Activated B cell treated with CpG ODN at 0.5 μM for 24 hours (primary cell): ENCODE measurements at regions of chr3 and their contacts with region 1.

Region 1: GRCh38 chr3:23834082-23834870 is 28.5 kb downstream of the UBE2E1 start:
- DNase-seq: no peak
- ATAC-seq: no peak
- H3K4me3 Mint-ChIP-seq: no peak overlapping the region
- H3K27ac Mint-ChIP-seq: no peak overlapping the region
- H3K4me1 Mint-ChIP-seq: peaks cover 75% of the 10 kb centered on the region
- H3K27me3 Mint-ChIP-seq: no peaks in the 10 kb centered on the region
- CTCF ChIP-seq: no peak

Region 2: DNA sequence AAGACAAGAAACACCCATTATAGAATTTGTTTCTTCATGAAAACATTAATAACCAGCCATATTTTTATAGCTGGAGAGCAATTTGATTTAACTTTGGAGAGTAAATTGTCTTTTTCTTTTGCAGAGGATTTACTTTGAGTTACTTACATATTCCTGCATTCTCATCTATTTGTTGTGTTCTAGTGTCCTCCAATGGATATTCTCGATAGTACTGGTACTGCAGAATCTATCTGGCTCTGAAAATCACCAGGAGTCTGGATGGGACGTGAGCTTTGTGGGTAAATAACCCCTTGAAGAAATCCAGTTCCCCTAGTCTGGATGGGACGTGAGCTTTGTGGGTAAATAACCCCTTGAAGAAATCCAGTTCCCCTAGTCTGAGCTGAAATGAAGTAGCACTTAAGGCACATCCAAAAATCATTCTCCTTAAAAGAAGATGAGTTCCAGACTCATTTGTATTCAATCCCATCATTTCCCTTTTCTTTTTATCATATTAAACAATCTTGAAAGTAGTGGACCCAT is 925.2 kb before region 1 on chr3:
- CTCF ChIA-PET with region 1: no interaction called
- POLR2A ChIA-PET with region 1: no interaction called
- intact Hi-C with region 1: no loop called
- DNase-seq: no peak
- ATAC-seq: no peak
- H3K4me3 Mint-ChIP-seq: no peak overlapping the region
- H3K27ac Mint-ChIP-seq: no peak overlapping the region
- H3K4me1 Mint-ChIP-seq: no peaks in the 10 kb centered on the region
- H3K27me3 Mint-ChIP-seq: peaks cover 2% of the 10 kb centered on the region
- CTCF ChIP-seq: no peak

Region 3: GRCh38 chr3:23442598-23443383 is 391.5 kb before region 1 on chr3:
- CTCF ChIA-PET with region 1: no interaction called
- POLR2A ChIA-PET with region 1: no interaction called
- intact Hi-C with region 1: loop called (anchors 10 kb)
- DNase-seq: no peak
- ATAC-seq: peak; percentile 88
- H3K4me3 Mint-ChIP-seq: peak overlapping the region; percentile 30
- H3K27ac Mint-ChIP-seq: no peak overlapping the region
- H3K4me1 Mint-ChIP-seq: peaks cover 71% of the 10 kb centered on the region
- H3K27me3 Mint-ChIP-seq: no peaks in the 10 kb centered on the region
- CTCF ChIP-seq: no peak

Region 4: DNA sequence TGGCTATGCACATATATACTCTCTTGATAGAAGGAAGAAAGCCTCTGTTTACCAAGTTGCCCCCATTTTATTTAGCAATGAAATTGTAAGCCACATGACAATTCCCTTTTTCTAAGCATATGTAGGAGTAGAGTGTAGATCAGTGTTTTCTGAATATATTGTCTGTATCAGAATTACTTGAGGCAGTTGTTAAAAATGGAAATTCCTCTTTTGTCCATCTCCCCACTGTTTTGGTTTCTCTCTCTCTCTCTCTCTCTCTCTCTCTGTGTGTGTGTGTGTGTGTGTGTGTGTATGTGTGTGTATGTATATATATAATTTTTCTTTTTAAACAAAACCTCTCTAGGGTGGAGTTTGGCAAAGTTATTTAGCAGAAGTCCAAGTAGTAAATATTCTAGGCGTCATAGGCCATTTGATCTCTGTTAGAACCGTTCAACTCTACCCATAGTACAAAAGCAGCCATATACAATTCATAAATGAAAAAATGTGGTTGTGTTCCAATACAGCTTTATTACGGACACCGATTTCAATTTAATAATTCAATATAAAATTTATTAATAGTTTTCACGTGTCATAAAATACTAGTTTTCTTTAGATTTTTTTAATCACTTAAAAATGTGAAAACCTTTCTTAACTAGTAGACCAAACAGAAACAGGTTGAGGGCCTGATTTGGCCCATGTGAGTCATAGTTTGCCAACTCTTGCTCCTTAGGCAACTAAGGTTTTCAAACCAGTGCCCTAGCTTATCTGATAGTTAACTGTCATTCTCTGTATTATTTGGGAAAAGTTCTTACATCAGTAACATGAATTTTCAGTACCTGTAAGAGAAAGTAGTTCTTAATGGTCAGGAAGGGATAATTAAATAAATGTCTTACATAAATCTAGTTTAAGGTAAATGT is 11.3 kb after region 1 on chr3:
- CTCF ChIA-PET with region 1: interaction called, 8 read pairs
- POLR2A ChIA-PET with region 1: interaction called, 11 read pairs
- intact Hi-C with region 1: no loop called
- DNase-seq: no peak
- ATAC-seq: no peak
- H3K4me3 Mint-ChIP-seq: no peak overlapping the region
- H3K27ac Mint-ChIP-seq: no peak overlapping the region
- H3K4me1 Mint-ChIP-seq: peaks cover 29% of the 10 kb centered on the region
- H3K27me3 Mint-ChIP-seq: no peaks in the 10 kb centered on the region
- CTCF ChIP-seq: no peak

Region 5: GRCh38 chr3:23945903-23946751 is 111.9 kb after region 1 on chr3:
- CTCF ChIA-PET with region 1: no interaction called
- POLR2A ChIA-PET with region 1: interaction called, 7 read pairs
- intact Hi-C with region 1: loop called (anchors 5 kb)
- DNase-seq: peak; percentile 97
- ATAC-seq: peak; percentile 79
- H3K4me3 Mint-ChIP-seq: peak overlapping the region; percentile 86
- H3K27ac Mint-ChIP-seq: peak overlapping the region; percentile 94
- H3K4me1 Mint-ChIP-seq: peaks cover 44% of the 10 kb centered on the region
- H3K27me3 Mint-ChIP-seq: no peaks in the 10 kb centered on the region
- CTCF ChIP-seq: no peak

Region 6: DNA sequence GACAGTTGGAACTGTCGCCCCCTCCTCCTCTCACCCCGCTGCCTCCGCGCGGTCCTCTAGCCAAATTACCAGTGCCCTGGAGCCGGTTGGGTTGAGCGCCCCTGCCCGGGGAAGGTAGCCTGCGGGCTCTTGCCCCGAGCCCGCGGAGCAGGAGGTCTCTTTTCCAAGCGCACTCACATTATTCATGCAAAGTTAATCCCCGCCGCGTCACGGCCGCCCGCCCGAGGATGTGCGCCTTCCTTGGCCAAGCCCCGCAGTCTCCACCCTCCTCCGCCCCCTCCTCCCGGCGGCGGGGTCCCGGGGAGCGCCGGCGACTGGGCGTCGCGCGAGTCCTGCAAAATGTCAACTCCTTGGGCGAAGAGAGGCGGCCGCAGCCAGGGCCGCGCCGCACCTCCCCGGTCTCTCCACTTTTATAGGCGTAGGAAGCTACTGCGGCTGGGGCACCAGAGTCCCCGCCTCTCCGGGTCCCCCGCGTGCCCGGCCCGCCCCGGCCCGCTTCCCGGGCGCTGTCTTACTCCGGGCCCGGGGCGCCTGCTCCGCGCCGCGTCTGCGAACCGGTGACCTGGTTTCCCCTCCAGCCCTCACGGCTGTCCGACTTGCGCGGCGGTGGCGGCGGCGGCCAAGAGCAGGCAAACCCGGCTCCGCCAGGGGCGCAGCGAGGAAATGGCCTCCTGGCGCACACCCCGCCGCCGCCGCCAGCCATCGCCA is 660.5 kb after region 1 on chr3 and contains the start of gene THRB:
- CTCF ChIA-PET with region 1: no interaction called
- POLR2A ChIA-PET with region 1: no interaction called
- intact Hi-C with region 1: loop called (anchors 10 kb)
- DNase-seq: peak; percentile 57
- ATAC-seq: peak; percentile 72
- H3K4me3 Mint-ChIP-seq: peak within 1 kb of the TSS; percentile 90
- H3K27ac Mint-ChIP-seq: peak within 1 kb of the TSS; percentile 78
- H3K4me1 Mint-ChIP-seq: peaks cover 15% of the 10 kb centered on the region
- H3K27me3 Mint-ChIP-seq: peaks cover 35% of the 10 kb centered on the region
- CTCF ChIP-seq: no peak
- total RNA-seq, gene THRB: 0.31 and 0.86 TPM in 2 replicates